K562 (cell line): ENCODE measurements at regions of chr4 and their contacts with region 1.

Region 1: GRCh38 chr4:102620697-102621497 is 119.7 kb downstream of the NFKB1 start:
- DNase-seq: peak; percentile 52 to 81 (median 64)
- ATAC-seq: peak; percentile 95
- H3K4me3 ChIP-seq: no peak overlapping the region
- H3K27ac ChIP-seq: no peak overlapping the region
- H3K4me1 ChIP-seq: no peaks in the 10 kb centered on the region
- H3K27me3 ChIP-seq: no peaks in the 10 kb centered on the region
- CTCF ChIP-seq: peak; percentile 71 to 94 (median 88)
- EP300 ChIP-seq: peak; percentile 18; the same call in 1 of the 2 replicates
- POLR2A ChIP-seq: no peak
- RAD21 ChIP-seq: peak; percentile 94 to 95

Region 2: GRCh38 chr4:102255454-102255853 is 365.4 kb before region 1 on chr4:
- CTCF ChIA-PET with region 1: no interaction called
- POLR2A ChIA-PET with region 1: no interaction called
- in situ Hi-C with region 1: no loop called
- intact Hi-C with region 1: loop called (anchors 10 kb)
- DNase-seq: no peak
- ATAC-seq: no peak
- H3K4me3 ChIP-seq: no peak overlapping the region
- H3K27ac ChIP-seq: no peak overlapping the region
- H3K4me1 ChIP-seq: no peaks in the 10 kb centered on the region; a peak in 1 of 5 replicates
- H3K27me3 ChIP-seq: no peaks in the 10 kb centered on the region
- CTCF ChIP-seq: no peak
- EP300 ChIP-seq: no peak
- POLR2A ChIP-seq: no peak
- RAD21 ChIP-seq: no peak

Region 3: DNA sequence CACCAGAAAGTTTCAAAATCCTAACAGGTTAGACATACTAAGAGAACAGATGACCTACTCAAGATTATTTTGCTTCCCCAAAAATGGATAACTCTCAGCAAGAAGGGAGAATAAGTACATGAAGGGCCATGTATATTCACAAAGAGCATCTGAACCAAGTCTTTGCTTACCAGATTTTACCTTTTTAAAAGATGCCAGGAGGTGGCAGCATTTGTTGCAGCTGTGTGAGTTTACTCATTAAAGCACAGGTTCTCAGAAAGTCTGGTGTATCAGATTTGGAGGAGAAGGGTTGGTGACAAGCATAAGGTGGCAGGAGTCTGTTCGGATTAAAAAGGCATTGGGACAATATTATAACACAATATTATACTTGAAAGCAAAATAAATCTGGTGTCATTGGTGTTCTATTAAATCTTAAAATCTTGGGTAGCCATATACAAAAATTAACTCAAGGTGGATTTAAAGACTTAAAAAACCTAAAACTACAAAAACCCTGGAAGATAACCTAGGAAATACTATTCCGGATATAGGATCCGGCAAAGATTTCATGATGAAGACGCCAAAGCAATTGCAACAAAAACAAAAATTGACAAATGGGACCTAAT is 171.0 kb before region 1 on chr4:
- CTCF ChIA-PET with region 1: no interaction called
- POLR2A ChIA-PET with region 1: no interaction called
- in situ Hi-C with region 1: no loop called
- intact Hi-C with region 1: loop called (anchors 2 kb)
- DNase-seq: peak; percentile 22 to 64 (median 32)
- ATAC-seq: peak; percentile 83
- H3K4me3 ChIP-seq: no peak overlapping the region
- H3K27ac ChIP-seq: no peak overlapping the region
- H3K4me1 ChIP-seq: peaks cover 0 to 2% of the 10 kb centered on the region in 2 experiments; a peak in 2 of 5 replicates
- H3K27me3 ChIP-seq: no peaks in the 10 kb centered on the region; a peak in 1 of 5 replicates
- CTCF ChIP-seq: peak; percentile 52 to 74 (median 52); a peak in 5 of 6 replicates
- EP300 ChIP-seq: no peak
- POLR2A ChIP-seq: no peak
- RAD21 ChIP-seq: peak; percentile 80 to 82

Region 4: DNA sequence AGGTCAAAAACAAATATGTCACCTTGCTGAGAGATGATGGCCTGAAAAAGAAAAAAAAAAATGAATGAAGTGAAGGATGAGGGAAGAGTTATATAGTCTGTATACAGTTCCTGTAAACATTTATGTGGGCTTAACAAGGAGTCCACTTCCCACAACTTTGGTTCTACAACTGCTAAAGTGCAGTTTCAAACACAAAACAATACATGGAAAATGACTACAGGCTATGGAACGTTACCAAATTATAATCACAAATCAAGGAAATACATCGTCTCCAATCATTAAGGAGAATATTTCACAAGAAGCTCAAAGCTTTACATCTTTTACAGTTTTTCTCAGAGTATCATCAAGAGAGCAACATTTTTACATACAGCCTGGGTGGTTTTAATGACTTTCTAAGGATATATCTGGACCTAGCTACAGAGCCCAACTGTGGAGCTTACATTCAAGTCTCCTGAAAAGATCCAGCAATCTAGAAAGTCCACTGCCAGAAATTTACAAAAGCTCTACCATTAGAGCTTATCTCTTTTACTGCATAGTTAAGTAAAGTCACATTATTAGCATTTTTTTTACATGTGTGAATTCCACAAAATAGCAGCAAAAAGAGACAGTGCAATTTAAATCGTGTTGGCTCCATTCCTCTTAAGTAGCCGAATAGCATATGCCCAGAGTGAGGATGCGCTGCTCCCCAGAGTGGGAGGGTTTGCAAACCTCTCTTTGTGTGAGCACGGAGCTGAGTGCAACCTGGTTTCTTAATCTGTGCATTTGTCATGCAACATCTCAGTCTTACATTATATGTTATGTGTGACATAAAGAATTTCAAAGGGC is 11.6 kb after region 1 on chr4:
- CTCF ChIA-PET with region 1: no interaction called
- POLR2A ChIA-PET with region 1: no interaction called
- in situ Hi-C with region 1: no loop called
- intact Hi-C with region 1: no loop called
- DNase-seq: no peak
- ATAC-seq: no peak
- H3K4me3 ChIP-seq: no peak overlapping the region
- H3K27ac ChIP-seq: no peak overlapping the region
- H3K4me1 ChIP-seq: no peaks in the 10 kb centered on the region; a peak in 1 of 5 replicates
- H3K27me3 ChIP-seq: no peaks in the 10 kb centered on the region
- CTCF ChIP-seq: no peak
- EP300 ChIP-seq: no peak
- POLR2A ChIP-seq: no peak
- RAD21 ChIP-seq: no peak

Region 5: GRCh38 chr4:103032574-103032973 is 411.7 kb after region 1 on chr4:
- CTCF ChIA-PET with region 1: interaction called, 5 read pairs
- POLR2A ChIA-PET with region 1: no interaction called
- in situ Hi-C with region 1: no loop called
- intact Hi-C with region 1: loop called (anchors 1 kb)
- DNase-seq: peak; percentile 46 to 66 (median 50)
- ATAC-seq: peak; percentile 99
- H3K4me3 ChIP-seq: no peak overlapping the region
- H3K27ac ChIP-seq: no peak overlapping the region
- H3K4me1 ChIP-seq: no peaks in the 10 kb centered on the region
- H3K27me3 ChIP-seq: no peaks in the 10 kb centered on the region
- CTCF ChIP-seq: peak; percentile 78 to 82 (median 79)
- EP300 ChIP-seq: no peak
- POLR2A ChIP-seq: no peak
- RAD21 ChIP-seq: peak; percentile 51 to 70

Region 6: GRCh38 chr4:103673983-103674382 is 1053.1 kb after region 1 on chr4:
- CTCF ChIA-PET with region 1: no interaction called
- POLR2A ChIA-PET with region 1: no interaction called
- in situ Hi-C with region 1: no loop called
- intact Hi-C with region 1: no loop called
- DNase-seq: no peak
- ATAC-seq: no peak
- H3K4me3 ChIP-seq: no peak overlapping the region
- H3K27ac ChIP-seq: no peak overlapping the region
- H3K4me1 ChIP-seq: no peaks in the 10 kb centered on the region
- H3K27me3 ChIP-seq: no peaks in the 10 kb centered on the region
- CTCF ChIP-seq: no peak
- EP300 ChIP-seq: no peak
- POLR2A ChIP-seq: no peak
- RAD21 ChIP-seq: no peak

Region 7: GRCh38 chr4:103934178-103934789 is 1313.4 kb after region 1 on chr4:
- CTCF ChIA-PET with region 1: no interaction called
- POLR2A ChIA-PET with region 1: no interaction called
- in situ Hi-C with region 1: loop called (anchors 25 kb)
- intact Hi-C with region 1: loop called (anchors 5 kb)
- DNase-seq: peak; percentile 14 to 61 (median 26)
- ATAC-seq: peak; percentile 73
- H3K4me3 ChIP-seq: no peak overlapping the region
- H3K27ac ChIP-seq: no peak overlapping the region
- H3K4me1 ChIP-seq: no peaks in the 10 kb centered on the region; a peak in 1 of 5 replicates
- H3K27me3 ChIP-seq: no peaks in the 10 kb centered on the region
- CTCF ChIP-seq: peak; percentile 18 to 61 (median 46); a peak in 2 of 6 replicates
- EP300 ChIP-seq: no peak
- POLR2A ChIP-seq: no peak
- RAD21 ChIP-seq: peak; percentile 51 to 56